ENCODE measurements at regions of chr3 and their contacts with region 1.

Region 1: DNA sequence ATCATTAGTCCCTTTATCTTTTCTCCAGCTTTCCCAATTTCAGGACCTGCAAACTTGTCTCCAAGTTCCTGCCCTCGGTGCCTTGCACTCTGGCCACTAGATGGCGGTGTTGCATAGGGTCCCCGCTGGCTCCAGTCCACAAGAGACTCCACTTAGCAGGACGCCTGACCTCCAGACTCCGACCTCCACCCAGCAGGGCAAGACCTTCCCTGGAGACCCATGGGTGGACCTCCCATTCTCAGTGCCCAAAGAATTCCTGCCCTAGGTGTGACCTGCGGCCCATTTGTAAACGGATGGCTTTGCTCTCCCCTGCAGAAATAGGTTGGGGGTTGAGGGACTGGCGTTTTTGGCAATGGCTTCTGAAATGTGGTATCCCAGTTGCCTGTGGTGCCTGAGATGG is 82.6 kb downstream of the LSM3 start:
- DNase-seq: peak in 1 of 2 experiments; percentile 97
- H3K4me3 ChIP-seq: no peak overlapping the region
- H3K27ac ChIP-seq: no peak overlapping the region
- H3K4me1 ChIP-seq: peaks cover 0 to 7% (median 0%) of the 10 kb centered on the region in 4 experiments; a peak in 1 of 7 replicates
- H3K27me3 ChIP-seq: 0 out of 7 replicates have a peak, but pooled peaks cover 0 to 3% (median 0%) of the 10 kb centered on the region in 4 experiments
- CTCF ChIP-seq: peak; percentile 95
- EP300 ChIP-seq: no peak
- POLR2A ChIP-seq: no peak
- RAD21 ChIP-seq: peak; percentile 99

Region 2: GRCh38 chr3:14289590-14290461 is 28.6 kb after region 1 on chr3:
- CTCF ChIA-PET with region 1: interaction called, 10 read pairs
- POLR2A ChIA-PET with region 1: no interaction called
- DNase-seq: no peak
- H3K4me3 ChIP-seq: no peak overlapping the region
- H3K27ac ChIP-seq: no peak overlapping the region
- H3K4me1 ChIP-seq: peaks cover 4 to 22% (median 14%) of the 10 kb centered on the region in 4 experiments
- H3K27me3 ChIP-seq: 0 out of 7 replicates have a peak, but pooled peaks cover 0 to 2% (median 0%) of the 10 kb centered on the region in 4 experiments
- CTCF ChIP-seq: no peak
- EP300 ChIP-seq: no peak
- POLR2A ChIP-seq: no peak
- RAD21 ChIP-seq: no peak

Region 3: GRCh38 chr3:14371573-14372474 is 110.6 kb after region 1 on chr3:
- CTCF ChIA-PET with region 1: interaction called, 18 read pairs
- POLR2A ChIA-PET with region 1: interaction called, 3 read pairs
- DNase-seq: no peak
- H3K4me3 ChIP-seq: no peak overlapping the region
- H3K27ac ChIP-seq: no peak overlapping the region
- H3K4me1 ChIP-seq: peaks cover 2 to 21% (median 5%) of the 10 kb centered on the region in 4 experiments; a peak in 6 of 7 replicates
- H3K27me3 ChIP-seq: no peaks in the 10 kb centered on the region
- CTCF ChIP-seq: no peak
- EP300 ChIP-seq: no peak
- POLR2A ChIP-seq: no peak
- RAD21 ChIP-seq: no peak

Region 4: GRCh38 chr3:14402304-14402811 is 141.1 kb after region 1 on chr3 and contains the start of gene SLC6A6:
- CTCF ChIA-PET with region 1: interaction called, 17 read pairs
- POLR2A ChIA-PET with region 1: interaction called, 5 read pairs
- DNase-seq: peak; percentile 87 to 92
- H3K4me3 ChIP-seq: peak within 1 kb of the TSS; percentile 82 to 99 (median 98)
- H3K27ac ChIP-seq: peak within 1 kb of the TSS; percentile 90
- H3K4me1 ChIP-seq: peaks cover 5 to 25% (median 18%) of the 10 kb centered on the region in 4 experiments
- H3K27me3 ChIP-seq: no peaks in the 10 kb centered on the region
- CTCF ChIP-seq: peak in 2 of 3 experiments; percentile 68 to 70; a peak in 3 of 4 replicates
- EP300 ChIP-seq: no peak
- POLR2A ChIP-seq: peak in 1 of 2 experiments; percentile 93; a peak in 2 of 3 replicates
- RAD21 ChIP-seq: peak; percentile 59 to 65
- total RNA-seq, gene SLC6A6: 140 and 144 TPM in 2 replicates

Region 5: GRCh38 chr3:14461748-14462324 is 200.6 kb after region 1 on chr3:
- CTCF ChIA-PET with region 1: interaction called, 49 read pairs
- POLR2A ChIA-PET with region 1: no interaction called
- DNase-seq: no peak
- H3K4me3 ChIP-seq: no peak overlapping the region
- H3K27ac ChIP-seq: no peak overlapping the region
- H3K4me1 ChIP-seq: peaks cover 0 to 8% (median 5%) of the 10 kb centered on the region in 4 experiments; a peak in 6 of 7 replicates
- H3K27me3 ChIP-seq: no peaks in the 10 kb centered on the region
- CTCF ChIP-seq: peak in 2 of 3 experiments; percentile 77 to 99; a peak in 3 of 4 replicates
- EP300 ChIP-seq: no peak
- POLR2A ChIP-seq: no peak
- RAD21 ChIP-seq: peak; percentile 79 to 83